PC-3 (cell line): ENCODE measurements at regions of chr4 and their contacts with region 1.

Region 1: GRCh38 chr4:110055158-110055768 is 142.6 kb downstream of the EGF start:
- DNase-seq: peak; percentile 35
- ATAC-seq: no peak
- H3K4me3 ChIP-seq: no peak overlapping the region
- H3K27ac ChIP-seq: no peak overlapping the region
- H3K4me1 ChIP-seq: peaks cover 29% of the 10 kb centered on the region
- H3K27me3 ChIP-seq: no peaks in the 10 kb centered on the region
- CTCF ChIP-seq: no peak

Region 2: GRCh38 chr4:110087070-110087708 is 31.9 kb after region 1 on chr4:
- CTCF ChIA-PET with region 1: no interaction called
- POLR2A ChIA-PET with region 1: no interaction called
- intact Hi-C with region 1: loop called (anchors 1 kb)
- DNase-seq: peak; percentile 85
- ATAC-seq: peak; percentile 10
- H3K4me3 ChIP-seq: no peak overlapping the region
- H3K27ac ChIP-seq: peak overlapping the region; percentile 58
- H3K4me1 ChIP-seq: peaks cover 70% of the 10 kb centered on the region
- H3K27me3 ChIP-seq: no peaks in the 10 kb centered on the region
- CTCF ChIP-seq: no peak

Region 3: GRCh38 chr4:110231869-110232268 is 176.6 kb after region 1 on chr4:
- CTCF ChIA-PET with region 1: no interaction called
- POLR2A ChIA-PET with region 1: no interaction called
- intact Hi-C with region 1: loop called (anchors 1 kb)
- DNase-seq: peak; percentile 81
- ATAC-seq: peak; percentile 97
- H3K4me3 ChIP-seq: no peak overlapping the region
- H3K27ac ChIP-seq: peak overlapping the region; percentile 41
- H3K4me1 ChIP-seq: peaks cover 20% of the 10 kb centered on the region
- H3K27me3 ChIP-seq: no peaks in the 10 kb centered on the region
- CTCF ChIP-seq: no peak